Calu3 (cell line): ENCODE measurements at regions of chr1 and their contacts with region 1.

Region 1: GRCh38 chr1:240189386-240189989 is 97.8 kb downstream of the FMN2 start:
- DNase-seq: peak; percentile 67
- H3K4me3 Mint-ChIP-seq: peak overlapping the region; percentile 19
- H3K27ac Mint-ChIP-seq: peak overlapping the region; percentile 16
- H3K4me1 Mint-ChIP-seq: peaks cover 9% of the 10 kb centered on the region
- H3K27me3 Mint-ChIP-seq: peaks cover 25% of the 10 kb centered on the region
- CTCF ChIP-seq: peak; percentile 56

Region 2: GRCh38 chr1:240455228-240455821 is 265.8 kb after region 1 on chr1:
- CTCF ChIA-PET with region 1: interaction called, 3 read pairs
- intact Hi-C with region 1: loop called (anchors 2 kb)
- DNase-seq: peak; percentile 27
- H3K4me3 Mint-ChIP-seq: no peak overlapping the region
- H3K27ac Mint-ChIP-seq: no peak overlapping the region
- H3K4me1 Mint-ChIP-seq: no peaks in the 10 kb centered on the region
- H3K27me3 Mint-ChIP-seq: no peaks in the 10 kb centered on the region
- CTCF ChIP-seq: peak; percentile 37

Region 3: DNA sequence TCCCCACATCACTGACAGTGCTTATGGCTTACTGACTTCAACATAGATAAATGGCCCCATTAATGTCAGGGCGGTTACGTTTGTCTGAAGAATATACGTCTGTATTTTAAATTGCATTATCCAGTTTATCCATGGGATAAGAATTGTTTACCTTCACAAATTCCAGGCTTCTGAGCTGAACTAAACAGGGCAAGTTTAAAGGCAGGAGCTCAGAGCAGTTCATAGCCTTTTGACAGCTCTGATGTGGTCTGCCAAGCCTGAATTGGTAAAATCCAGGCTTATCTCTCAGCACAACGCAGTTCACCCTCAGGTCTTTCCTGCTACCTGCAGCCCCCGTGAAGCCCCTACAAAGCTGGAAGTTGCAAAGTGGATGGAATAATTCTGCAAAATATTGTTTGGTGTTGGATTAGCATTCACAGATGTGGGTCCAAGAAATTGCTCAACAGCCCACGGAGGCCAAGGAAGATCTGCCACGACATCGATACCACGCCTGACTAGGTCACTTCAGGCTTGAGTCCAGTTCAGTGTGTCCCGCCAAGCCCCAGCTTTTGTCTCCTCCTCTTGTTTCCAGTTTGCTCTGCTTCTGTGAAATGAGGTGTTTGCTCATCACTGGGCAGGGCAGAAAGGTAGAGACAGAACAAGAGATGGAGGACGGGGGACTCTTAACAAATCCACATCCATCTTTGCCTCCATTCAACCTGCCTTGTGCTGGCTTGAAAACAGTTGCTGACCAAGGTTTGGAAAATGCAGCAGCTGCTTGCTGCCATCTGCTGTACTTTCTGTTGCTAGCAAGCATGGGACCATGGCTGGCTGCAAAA is 502.2 kb after region 1 on chr1:
- CTCF ChIA-PET with region 1: interaction called, 5 read pairs
- intact Hi-C with region 1: loop called (anchors 1 kb)
- DNase-seq: peak; percentile 38
- H3K4me3 Mint-ChIP-seq: no peak overlapping the region
- H3K27ac Mint-ChIP-seq: no peak overlapping the region
- H3K4me1 Mint-ChIP-seq: no peaks in the 10 kb centered on the region
- H3K27me3 Mint-ChIP-seq: no peaks in the 10 kb centered on the region
- CTCF ChIP-seq: peak; percentile 41